ENCODE measurements at regions of chr1 and their contacts with region 1.

Region 1: GRCh38 chr1:16366722-16367257 is at the start of gene SZRD1:
- DNase-seq: peak; percentile 99
- ATAC-seq: peak; percentile 82
- H3K4me3 ChIP-seq: peak within 1 kb of the TSS; percentile 88
- H3K27ac ChIP-seq: peak within 1 kb of the TSS; percentile 96
- H3K4me1 ChIP-seq: no peaks in the 10 kb centered on the region; the same call in none of the 2 replicates
- H3K27me3 ChIP-seq: no peaks in the 10 kb centered on the region
- CTCF ChIP-seq: no peak
- POLR2A ChIP-seq: no peak
- RAD21 ChIP-seq: no peak
- total RNA-seq, gene SZRD1: 104 and 119 TPM in 2 replicates

Region 2: DNA sequence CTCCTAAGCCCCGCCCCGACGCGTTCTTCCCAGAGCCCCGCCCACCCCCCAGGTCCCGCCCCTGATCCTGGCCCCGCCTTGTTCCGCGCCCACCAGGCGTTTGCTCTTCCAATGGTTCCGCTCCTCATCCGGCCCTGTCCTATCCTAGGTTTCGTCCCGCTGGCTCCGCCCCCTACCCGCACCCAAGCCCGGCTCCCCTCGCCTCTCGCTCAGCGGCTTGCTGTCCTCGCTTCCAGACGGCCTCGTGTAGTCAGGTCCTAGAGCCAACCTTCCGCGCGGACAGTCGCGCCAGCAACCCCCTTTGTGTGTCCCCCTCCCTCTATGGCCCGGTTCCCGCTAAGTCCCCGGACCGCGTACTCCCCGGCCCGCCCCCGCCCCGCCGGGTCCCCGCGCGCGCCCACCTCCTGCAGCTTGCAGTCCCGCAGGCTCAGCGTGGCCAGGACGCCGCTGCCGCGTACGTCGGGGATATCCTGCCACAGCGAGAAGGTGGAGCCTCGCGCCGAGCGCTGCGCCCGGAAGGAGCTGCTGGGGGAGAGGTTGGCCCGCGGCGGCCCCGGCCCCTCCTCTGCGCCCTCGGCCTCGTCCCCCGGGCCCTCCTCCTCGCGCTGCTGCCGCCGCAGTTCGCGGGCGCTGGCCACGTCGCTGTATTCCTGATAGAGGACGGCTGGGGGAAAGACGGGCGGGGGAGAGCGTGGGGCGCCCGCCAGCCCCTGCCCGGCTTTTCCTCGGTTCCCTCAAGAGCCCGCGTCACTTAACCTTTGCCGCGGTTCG is 160.1 kb before region 1 on chr1:
- CTCF ChIA-PET with region 1: no interaction called
- POLR2A ChIA-PET with region 1: no interaction called
- dilution Hi-C with region 1: no loop called
- in situ Hi-C with region 1: no loop called
- intact Hi-C with region 1: loop called (anchors 5 kb)
- DNase-seq: peak; percentile 98
- ATAC-seq: peak; percentile 97
- H3K4me3 ChIP-seq: peak overlapping the region; percentile 32
- H3K27ac ChIP-seq: peak overlapping the region; percentile 76
- H3K4me1 ChIP-seq: peaks cover 9% of the 10 kb centered on the region
- H3K27me3 ChIP-seq: no peaks in the 10 kb centered on the region
- CTCF ChIP-seq: 0 out of 2 replicates have a peak, but pooled peaks have one; percentile 0
- POLR2A ChIP-seq: peak; percentile 89
- RAD21 ChIP-seq: no peak

Region 3: DNA sequence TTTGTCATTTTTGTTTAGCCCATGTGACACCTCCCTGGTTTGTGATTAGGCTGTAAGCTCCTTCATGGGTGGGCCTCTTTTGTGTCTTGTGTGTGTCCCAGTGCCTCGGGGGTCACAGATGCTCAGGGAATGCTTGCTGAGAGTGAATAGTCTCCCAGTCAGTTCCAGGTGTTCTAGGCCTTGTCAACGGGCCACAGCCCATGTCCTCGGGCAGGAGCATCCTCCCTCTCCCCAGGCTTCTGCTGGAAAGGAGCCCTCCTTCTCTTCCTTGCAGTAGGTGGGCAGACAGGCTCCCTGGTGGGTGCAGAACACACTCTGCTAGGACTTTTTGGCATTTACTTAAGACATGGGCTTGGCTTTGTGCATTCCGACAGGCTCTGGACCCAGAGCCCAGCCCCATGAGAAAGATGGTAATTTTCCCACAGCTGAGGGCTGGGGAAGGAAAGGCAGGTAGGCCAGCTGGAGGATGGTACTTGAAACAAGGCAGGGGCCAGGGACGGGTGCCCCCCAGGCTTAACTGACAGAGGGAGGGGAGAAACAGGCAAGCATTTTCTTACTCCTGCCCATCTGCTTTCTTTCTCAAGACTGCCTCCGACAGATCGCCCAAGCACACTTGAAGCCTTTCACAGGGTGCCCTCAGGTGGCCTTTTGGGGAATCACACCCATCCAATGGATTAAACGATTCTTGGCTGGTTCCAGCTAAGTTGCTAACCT is 122.7 kb before region 1 on chr1:
- CTCF ChIA-PET with region 1: interaction called, 4 read pairs
- POLR2A ChIA-PET with region 1: no interaction called
- dilution Hi-C with region 1: no loop called
- in situ Hi-C with region 1: no loop called
- intact Hi-C with region 1: loop called (anchors 1 kb)
- DNase-seq: peak; percentile 81
- ATAC-seq: peak; percentile 93
- H3K4me3 ChIP-seq: no peak overlapping the region
- H3K27ac ChIP-seq: no peak overlapping the region
- H3K4me1 ChIP-seq: peaks cover 10% of the 10 kb centered on the region
- H3K27me3 ChIP-seq: no peaks in the 10 kb centered on the region
- CTCF ChIP-seq: peak; percentile 89
- POLR2A ChIP-seq: peak; percentile 31; the same call in 1 of the 2 replicates
- RAD21 ChIP-seq: peak; percentile 90

Region 4: GRCh38 chr1:16440470-16441281 is 73.9 kb after region 1 on chr1 and contains the start of gene NECAP2:
- CTCF ChIA-PET with region 1: interaction called, 3 read pairs
- POLR2A ChIA-PET with region 1: interaction called, 3 read pairs
- dilution Hi-C with region 1: no loop called
- in situ Hi-C with region 1: no loop called
- intact Hi-C with region 1: loop called (anchors 1 kb)
- DNase-seq: peak; percentile 91
- ATAC-seq: peak; percentile 98
- H3K4me3 ChIP-seq: peak within 1 kb of the TSS; percentile 92
- H3K27ac ChIP-seq: peak within 1 kb of the TSS; percentile 84
- H3K4me1 ChIP-seq: peaks cover 2% of the 10 kb centered on the region
- H3K27me3 ChIP-seq: no peaks in the 10 kb centered on the region
- CTCF ChIP-seq: peak; percentile 95
- POLR2A ChIP-seq: peak; percentile 92
- RAD21 ChIP-seq: peak; percentile 46
- total RNA-seq, gene NECAP2: 79.7 and 85.1 TPM in 2 replicates

Region 5: DNA sequence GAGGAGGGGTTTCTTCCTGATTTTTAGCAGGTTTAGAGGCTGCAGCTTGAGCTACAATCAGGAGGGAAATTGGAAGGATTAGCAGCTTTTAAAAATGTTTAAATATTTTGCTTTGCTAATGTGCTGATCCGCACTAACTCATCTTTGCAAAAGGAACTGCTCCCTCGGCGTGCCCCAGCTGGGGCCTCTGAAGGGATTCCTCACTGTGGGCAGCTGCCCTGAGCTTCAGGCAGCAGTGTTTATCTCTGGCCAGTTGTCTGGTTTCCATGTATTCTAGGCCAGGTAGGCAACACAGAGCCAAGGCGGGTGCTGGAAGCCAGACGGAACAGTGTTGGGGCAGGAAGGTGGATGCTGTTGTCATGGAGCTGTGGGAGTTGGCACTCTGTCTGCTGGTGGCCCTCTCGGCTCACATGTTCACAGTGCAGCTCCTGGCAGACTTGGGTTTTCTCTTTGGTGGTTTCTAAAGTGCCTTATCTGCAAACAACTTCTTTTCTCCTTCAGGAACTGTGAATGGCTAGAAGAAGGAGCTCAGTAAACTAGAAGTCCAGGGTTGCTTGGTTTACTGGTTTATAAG is 92.6 kb after region 1 on chr1:
- CTCF ChIA-PET with region 1: no interaction called
- POLR2A ChIA-PET with region 1: no interaction called
- dilution Hi-C with region 1: no loop called
- in situ Hi-C with region 1: no loop called
- intact Hi-C with region 1: no loop called
- DNase-seq: no peak
- ATAC-seq: no peak
- H3K4me3 ChIP-seq: no peak overlapping the region
- H3K27ac ChIP-seq: no peak overlapping the region
- H3K4me1 ChIP-seq: no peaks in the 10 kb centered on the region
- H3K27me3 ChIP-seq: no peaks in the 10 kb centered on the region
- CTCF ChIP-seq: no peak
- POLR2A ChIP-seq: no peak
- RAD21 ChIP-seq: no peak

Region 6: GRCh38 chr1:16607433-16607851 is 240.7 kb after region 1 on chr1:
- CTCF ChIA-PET with region 1: no interaction called
- POLR2A ChIA-PET with region 1: no interaction called
- dilution Hi-C with region 1: no loop called
- in situ Hi-C with region 1: no loop called
- intact Hi-C with region 1: no loop called
- DNase-seq: no peak
- ATAC-seq: no peak
- H3K4me3 ChIP-seq: no peak overlapping the region
- H3K27ac ChIP-seq: no peak overlapping the region
- H3K4me1 ChIP-seq: peaks cover 17% of the 10 kb centered on the region
- H3K27me3 ChIP-seq: no peaks in the 10 kb centered on the region
- CTCF ChIP-seq: no peak
- POLR2A ChIP-seq: no peak
- RAD21 ChIP-seq: no peak

Region 7: GRCh38 chr1:17405898-17406759 is 1039.3 kb after region 1 on chr1:
- CTCF ChIA-PET with region 1: no interaction called
- POLR2A ChIA-PET with region 1: no interaction called
- dilution Hi-C with region 1: no loop called
- in situ Hi-C with region 1: no loop called
- intact Hi-C with region 1: no loop called
- DNase-seq: peak; percentile 44
- ATAC-seq: peak; percentile 93
- H3K4me3 ChIP-seq: no peak overlapping the region
- H3K27ac ChIP-seq: no peak overlapping the region
- H3K4me1 ChIP-seq: peaks cover 2% of the 10 kb centered on the region; the same call in 1 of the 2 replicates
- H3K27me3 ChIP-seq: no peaks in the 10 kb centered on the region
- CTCF ChIP-seq: peak; percentile 67
- POLR2A ChIP-seq: no peak
- RAD21 ChIP-seq: peak; percentile 65

Measured in IMR-90 (cell line).